ENCODE measurements at regions of chr9 and their contacts with region 1.

Region 1: DNA sequence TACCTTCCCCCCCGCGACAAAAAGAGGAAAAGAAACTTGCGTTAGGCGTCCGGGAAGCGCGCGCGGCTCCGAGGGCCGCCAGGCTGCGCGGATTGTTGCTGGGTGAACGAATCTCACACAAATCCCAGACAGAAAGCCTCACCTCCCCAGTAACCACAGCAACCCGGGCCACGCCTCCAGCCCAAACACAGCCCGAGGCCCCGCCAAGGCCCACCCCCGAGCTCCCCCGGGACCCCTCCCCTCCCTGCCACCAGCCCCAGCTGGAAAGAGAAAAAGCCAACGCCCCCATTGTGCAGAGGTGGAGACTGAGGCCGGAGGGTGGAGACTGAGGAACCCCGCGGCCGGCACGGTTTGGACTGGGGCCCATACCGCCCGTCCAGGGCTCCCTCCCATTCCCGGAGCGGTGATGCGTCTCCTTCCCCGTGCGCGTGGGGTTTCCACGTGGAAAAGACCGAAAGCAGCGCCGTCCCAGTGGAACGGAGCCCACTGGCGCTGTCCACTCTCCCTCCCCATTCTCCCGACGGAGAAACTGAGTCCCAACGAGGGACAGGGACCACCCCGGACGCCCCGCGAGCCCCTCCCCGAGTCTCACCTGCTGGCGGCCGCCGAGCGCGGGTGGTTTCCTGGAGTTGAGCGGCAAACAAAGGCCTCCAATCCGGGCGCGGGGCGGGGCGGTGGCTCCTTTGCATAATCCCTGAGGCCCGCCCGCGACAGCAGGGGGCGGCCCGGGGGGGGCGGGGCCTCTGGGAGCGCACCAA is 10.2 kb upstream of the AKNA start:
- DNase-seq: peak; percentile 91 to 98 (median 96)
- ATAC-seq: peak; percentile 85
- H3K4me3 ChIP-seq: peak overlapping the region; percentile 98
- H3K4me3 Mint-ChIP-seq: peak overlapping the region; percentile 98
- H3K27ac ChIP-seq: peak overlapping the region; percentile 92 to 97
- H3K27ac Mint-ChIP-seq: peak overlapping the region; percentile 97
- H3K4me1 ChIP-seq: peaks cover 45% of the 10 kb centered on the region
- H3K4me1 Mint-ChIP-seq: peaks cover 50% of the 10 kb centered on the region
- H3K27me3 ChIP-seq: no peaks in the 10 kb centered on the region
- H3K27me3 Mint-ChIP-seq: no peaks in the 10 kb centered on the region
- CTCF ChIP-seq: no peak

Region 2: DNA sequence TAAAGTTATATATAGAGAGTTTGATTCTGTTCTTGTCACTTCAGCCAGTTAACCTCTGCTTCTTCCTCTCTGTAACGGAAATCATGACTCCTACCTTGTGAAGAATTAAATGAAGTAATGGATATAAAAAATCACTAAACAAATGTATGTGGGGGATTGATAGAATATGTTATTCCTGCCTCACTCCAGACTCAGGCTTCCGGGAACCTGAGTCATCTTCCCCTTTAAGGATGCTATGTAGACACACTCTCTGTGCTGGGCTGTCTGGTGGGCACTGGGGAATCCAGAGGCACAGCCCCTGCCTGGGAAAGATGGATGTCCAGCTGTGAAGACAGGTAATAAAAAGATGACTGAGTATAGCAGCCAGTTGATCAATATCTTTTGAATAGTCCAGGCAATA is 444.5 kb before region 1 on chr9:
- CTCF ChIA-PET with region 1: no interaction called
- POLR2A ChIA-PET with region 1: no interaction called
- intact Hi-C with region 1: no loop called
- DNase-seq: peak in 1 of 9 experiments; percentile 27
- ATAC-seq: no peak
- H3K4me3 ChIP-seq: no peak overlapping the region
- H3K4me3 Mint-ChIP-seq: no peak overlapping the region
- H3K27ac ChIP-seq: no peak overlapping the region
- H3K27ac Mint-ChIP-seq: no peak overlapping the region
- H3K4me1 ChIP-seq: no peaks in the 10 kb centered on the region
- H3K4me1 Mint-ChIP-seq: no peaks in the 10 kb centered on the region
- H3K27me3 ChIP-seq: no peaks in the 10 kb centered on the region
- H3K27me3 Mint-ChIP-seq: no peaks in the 10 kb centered on the region
- CTCF ChIP-seq: no peak

Region 3: GRCh38 chr9:114348906-114349482 is 49.0 kb before region 1 on chr9:
- CTCF ChIA-PET with region 1: interaction called, 3 read pairs
- POLR2A ChIA-PET with region 1: interaction called, 4 read pairs
- intact Hi-C with region 1: loop called in 1 of 2 experiments (anchors 2 kb)
- DNase-seq: peak in 7 of 9 experiments; percentile 48 to 88 (median 70)
- ATAC-seq: peak; percentile 87
- H3K4me3 ChIP-seq: no peak overlapping the region
- H3K4me3 Mint-ChIP-seq: peak overlapping the region; percentile 36
- H3K27ac ChIP-seq: peak overlapping the region; percentile 21 to 62
- H3K27ac Mint-ChIP-seq: peak overlapping the region; percentile 95
- H3K4me1 ChIP-seq: peaks cover 50% of the 10 kb centered on the region
- H3K4me1 Mint-ChIP-seq: peaks cover 63% of the 10 kb centered on the region
- H3K27me3 ChIP-seq: no peaks in the 10 kb centered on the region
- H3K27me3 Mint-ChIP-seq: no peaks in the 10 kb centered on the region
- CTCF ChIP-seq: no peak

Region 4: DNA sequence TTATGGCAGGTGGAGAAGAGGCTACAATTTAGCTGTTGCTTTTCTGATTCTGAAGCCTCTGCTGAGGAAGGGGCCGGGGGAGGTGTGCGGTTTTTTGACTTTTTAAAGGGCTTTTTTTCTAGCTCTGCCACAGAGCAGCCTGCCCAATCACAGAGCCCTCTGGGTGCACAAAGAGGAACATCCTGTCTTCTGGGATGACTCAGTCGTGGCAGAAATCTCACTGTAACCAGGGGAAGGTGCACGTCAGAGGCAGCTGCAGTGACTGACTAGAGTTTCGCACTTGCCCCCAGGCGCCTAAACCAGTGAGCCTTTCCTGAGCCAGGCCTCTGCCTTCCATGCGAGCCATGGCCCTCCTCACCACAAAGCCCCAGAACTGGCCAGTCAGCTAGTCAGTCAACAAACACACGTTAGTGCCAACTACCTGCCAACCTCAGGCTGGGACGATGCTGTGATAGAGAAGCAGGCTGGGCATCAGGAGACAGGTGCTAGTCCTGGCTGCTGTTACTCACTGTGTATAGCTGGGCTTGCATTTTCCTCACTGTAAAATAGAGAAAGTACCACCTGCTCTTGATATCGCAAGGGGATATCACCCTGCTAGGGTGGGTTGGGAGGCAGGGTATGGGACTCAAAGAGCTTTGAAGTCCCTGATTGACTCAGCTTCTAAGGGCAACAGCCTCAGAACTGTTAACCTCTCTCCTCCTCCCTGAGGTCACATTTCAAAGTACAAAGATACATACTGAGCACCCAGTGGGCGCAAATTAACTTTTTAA is 12.4 kb before region 1 on chr9:
- CTCF ChIA-PET with region 1: interaction called, 27 read pairs
- POLR2A ChIA-PET with region 1: interaction called, 65 read pairs
- intact Hi-C with region 1: loop called (anchors 1 kb)
- DNase-seq: peak; percentile 76 to 98 (median 89)
- ATAC-seq: peak; percentile 70
- H3K4me3 ChIP-seq: peak overlapping the region; percentile 89 to 95
- H3K4me3 Mint-ChIP-seq: peak overlapping the region; percentile 99
- H3K27ac ChIP-seq: peak overlapping the region; percentile 90 to 93
- H3K27ac Mint-ChIP-seq: peak overlapping the region; percentile 95
- H3K4me1 ChIP-seq: peaks cover 72% of the 10 kb centered on the region
- H3K4me1 Mint-ChIP-seq: peaks cover 75% of the 10 kb centered on the region
- H3K27me3 ChIP-seq: no peaks in the 10 kb centered on the region
- H3K27me3 Mint-ChIP-seq: no peaks in the 10 kb centered on the region
- CTCF ChIP-seq: no peak

Region 5: DNA sequence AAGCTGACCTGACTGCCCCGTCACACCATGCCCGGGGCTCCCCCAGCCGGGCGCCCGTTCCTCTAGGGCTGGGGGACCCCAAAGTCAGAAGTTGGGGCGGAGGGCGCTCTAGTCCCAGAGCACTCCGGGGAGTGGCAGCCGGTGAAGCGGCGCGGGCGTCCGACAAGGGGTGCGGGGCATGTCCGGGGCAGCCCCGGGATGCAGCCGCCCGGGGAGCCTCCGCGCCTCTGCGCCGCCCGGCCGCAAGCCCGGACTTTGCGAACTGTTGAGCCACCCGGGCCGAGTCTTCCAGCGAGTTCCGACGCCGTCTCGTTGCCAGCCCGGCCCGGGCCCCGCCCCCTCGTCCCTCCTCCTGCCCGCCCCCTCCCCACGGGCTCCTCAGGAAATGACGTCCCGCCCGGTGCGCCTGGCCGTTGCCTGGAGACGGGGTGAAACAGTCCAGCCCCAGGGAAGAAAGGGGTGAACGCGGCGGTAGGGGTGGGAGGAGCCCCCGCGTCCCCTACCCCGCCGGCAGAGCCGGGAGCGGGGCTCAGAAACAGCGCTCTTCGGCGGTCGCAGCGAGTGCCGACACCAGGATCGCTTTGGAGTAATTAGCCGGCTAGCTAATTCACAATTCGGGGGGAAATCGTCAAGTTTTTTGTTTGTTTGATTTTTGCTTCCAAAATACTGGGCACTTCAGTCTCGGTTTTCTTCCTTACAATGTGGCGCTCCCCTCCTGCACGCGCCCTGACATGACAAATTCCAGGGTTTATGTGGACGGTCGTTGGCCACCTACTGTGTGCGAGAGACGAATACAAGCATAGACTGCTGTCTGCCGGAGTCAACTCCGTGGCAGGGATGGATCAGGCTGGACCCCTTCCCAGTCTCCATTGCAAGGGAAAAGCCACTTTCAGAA is 107.4 kb after region 1 on chr9 and contains the start of gene WHRN:
- CTCF ChIA-PET with region 1: interaction called, 77 read pairs
- POLR2A ChIA-PET with region 1: no interaction called
- intact Hi-C with region 1: loop called (anchors 1 to 2 kb)
- DNase-seq: peak; percentile 84 to 96 (median 91)
- ATAC-seq: peak; percentile 82
- H3K4me3 ChIP-seq: peak within 1 kb of the TSS; percentile 51 to 64
- H3K4me3 Mint-ChIP-seq: peak within 1 kb of the TSS; percentile 86
- H3K27ac ChIP-seq: peak within 1 kb of the TSS; percentile 33 to 45
- H3K27ac Mint-ChIP-seq: peak within 1 kb of the TSS; percentile 77
- H3K4me1 ChIP-seq: peaks cover 13% of the 10 kb centered on the region
- H3K4me1 Mint-ChIP-seq: peaks cover 34% of the 10 kb centered on the region
- H3K27me3 ChIP-seq: peaks cover 0 to 14% of the 10 kb centered on the region in 2 experiments
- H3K27me3 Mint-ChIP-seq: peaks cover 30% of the 10 kb centered on the region
- CTCF ChIP-seq: no peak
- total RNA-seq, gene WHRN: 41.9 to 45.5 TPM

Region 6: GRCh38 chr9:114894801-114895433 is 496.9 kb after region 1 on chr9:
- CTCF ChIA-PET with region 1: no interaction called
- POLR2A ChIA-PET with region 1: no interaction called
- intact Hi-C with region 1: loop called (anchors 5 kb)
- DNase-seq: no peak
- ATAC-seq: no peak
- H3K4me3 ChIP-seq: no peak overlapping the region
- H3K4me3 Mint-ChIP-seq: peak overlapping the region; percentile 26
- H3K27ac ChIP-seq: peak overlapping the region in 1 of 2 experiments; percentile 1
- H3K27ac Mint-ChIP-seq: peak overlapping the region; percentile 37
- H3K4me1 ChIP-seq: peaks cover 64% of the 10 kb centered on the region
- H3K4me1 Mint-ChIP-seq: peaks cover 49% of the 10 kb centered on the region
- H3K27me3 ChIP-seq: no peaks in the 10 kb centered on the region
- H3K27me3 Mint-ChIP-seq: no peaks in the 10 kb centered on the region
- CTCF ChIP-seq: no peak